ENCODE measurements at regions of chr11 and their contacts with region 1.

Region 1: GRCh38 chr11:3091791-3092602 is 34.8 kb upstream of the CARS1 start:
- DNase-seq: peak; percentile 96
- CTCF ChIP-seq: peak; percentile 98

Region 2: GRCh38 chr11:3037040-3037944 is 54.7 kb before region 1 on chr11:
- in situ Hi-C with region 1: loop called (anchors 10 kb)
- DNase-seq: peak; percentile 64
- CTCF ChIP-seq: peak; percentile 37